ENCODE measurements at regions of chr6 and their contacts with region 1.

Region 1: DNA sequence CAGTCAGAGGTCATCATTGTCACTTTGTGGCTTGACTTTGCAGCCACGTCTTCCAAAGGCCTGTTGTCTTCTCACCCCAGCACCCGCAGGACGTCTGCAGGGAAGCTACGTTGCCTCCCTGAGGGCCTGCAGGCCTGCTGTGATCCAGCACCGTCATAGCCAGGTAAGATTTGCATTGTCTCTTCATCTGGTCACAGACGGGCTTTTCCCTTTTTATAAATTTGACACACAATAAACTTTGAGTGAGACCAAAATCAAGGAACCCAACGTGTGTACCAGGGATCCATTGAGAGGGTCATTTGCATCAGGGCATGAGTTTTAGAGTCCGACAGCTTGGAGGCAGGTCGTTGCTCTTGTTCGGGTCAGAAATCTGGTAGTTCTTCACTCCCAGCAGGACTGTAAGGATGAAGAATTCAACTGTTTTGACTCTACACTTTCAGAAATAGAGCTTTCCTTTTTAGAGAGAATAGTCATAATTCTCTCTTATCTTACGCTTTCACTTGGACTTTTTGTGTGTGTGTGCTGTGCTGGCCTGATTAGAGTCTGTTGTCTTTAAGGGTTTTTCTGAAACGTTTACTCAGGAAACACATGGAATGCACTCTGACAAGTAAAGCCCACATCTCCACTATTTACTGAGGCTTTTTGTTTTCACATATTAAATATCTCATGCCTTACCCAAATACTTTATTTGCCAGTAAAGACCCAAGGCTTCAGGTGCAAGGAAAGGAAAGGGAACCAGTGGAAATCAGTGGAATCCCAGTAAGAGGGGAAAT is 177.2 kb upstream of the TAB2 start:
- DNase-seq: peak; percentile 87
- H3K4me3 Mint-ChIP-seq: peak overlapping the region; percentile 66
- H3K27ac Mint-ChIP-seq: peak overlapping the region; percentile 94
- H3K4me1 Mint-ChIP-seq: peaks cover 42% of the 10 kb centered on the region
- H3K27me3 Mint-ChIP-seq: no peaks in the 10 kb centered on the region

Region 2: GRCh38 chr6:149082286-149082707 is 58.0 kb before region 1 on chr6:
- CTCF ChIA-PET with region 1: no interaction called
- intact Hi-C with region 1: loop called (anchors 1 kb)
- DNase-seq: peak; percentile 97
- H3K4me3 Mint-ChIP-seq: no peak overlapping the region
- H3K27ac Mint-ChIP-seq: peak overlapping the region; percentile 41
- H3K4me1 Mint-ChIP-seq: peaks cover 54% of the 10 kb centered on the region
- H3K27me3 Mint-ChIP-seq: no peaks in the 10 kb centered on the region

Region 3: GRCh38 chr6:149094156-149094555 is 46.2 kb before region 1 on chr6:
- CTCF ChIA-PET with region 1: interaction called, 3 read pairs
- intact Hi-C with region 1: loop called (anchors 1 kb)
- DNase-seq: peak; percentile 31
- H3K4me3 Mint-ChIP-seq: no peak overlapping the region
- H3K27ac Mint-ChIP-seq: peak overlapping the region; percentile 80
- H3K4me1 Mint-ChIP-seq: peaks cover 40% of the 10 kb centered on the region
- H3K27me3 Mint-ChIP-seq: no peaks in the 10 kb centered on the region

Region 4: GRCh38 chr6:149170564-149171452 is 30.5 kb after region 1 on chr6:
- CTCF ChIA-PET with region 1: no interaction called
- intact Hi-C with region 1: no loop called
- DNase-seq: no peak
- H3K4me3 Mint-ChIP-seq: no peak overlapping the region
- H3K27ac Mint-ChIP-seq: no peak overlapping the region
- H3K4me1 Mint-ChIP-seq: peaks cover 38% of the 10 kb centered on the region
- H3K27me3 Mint-ChIP-seq: no peaks in the 10 kb centered on the region

Region 5: DNA sequence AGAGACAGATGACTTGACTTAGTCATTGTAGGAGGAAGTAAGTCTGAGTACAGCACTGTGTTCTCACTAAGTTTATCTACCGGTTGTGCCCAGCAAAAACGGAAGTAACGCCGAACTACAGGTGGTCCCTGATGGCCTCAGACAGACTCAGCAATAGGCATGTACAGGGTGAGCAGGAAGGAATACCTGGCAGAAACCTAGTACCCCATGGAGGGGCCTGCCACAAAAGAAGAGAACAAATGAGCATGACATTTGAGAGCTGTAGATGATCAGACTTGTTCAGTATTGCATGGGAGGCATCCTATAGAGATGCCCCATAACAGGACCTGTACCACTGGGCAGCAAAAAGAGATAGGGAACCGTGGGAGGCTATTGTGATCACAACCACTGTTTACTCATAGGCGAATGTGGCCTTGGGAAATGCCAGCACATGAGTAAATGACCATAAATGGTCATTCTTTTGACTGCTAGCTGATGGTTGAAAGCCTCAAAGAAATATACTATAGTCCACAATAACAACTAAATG is 70.8 kb after region 1 on chr6:
- CTCF ChIA-PET with region 1: no interaction called
- intact Hi-C with region 1: loop called (anchors 1 kb)
- DNase-seq: peak; percentile 57
- H3K4me3 Mint-ChIP-seq: no peak overlapping the region
- H3K27ac Mint-ChIP-seq: peak overlapping the region; percentile 77
- H3K4me1 Mint-ChIP-seq: peaks cover 19% of the 10 kb centered on the region
- H3K27me3 Mint-ChIP-seq: no peaks in the 10 kb centered on the region

Region 6: GRCh38 chr6:149271348-149272340 is 131.3 kb after region 1 on chr6:
- CTCF ChIA-PET with region 1: no interaction called
- intact Hi-C with region 1: loop called (anchors 2 kb)
- DNase-seq: peak; percentile 68
- H3K4me3 Mint-ChIP-seq: peak overlapping the region; percentile 48
- H3K27ac Mint-ChIP-seq: peak overlapping the region; percentile 89
- H3K4me1 Mint-ChIP-seq: peaks cover 35% of the 10 kb centered on the region
- H3K27me3 Mint-ChIP-seq: no peaks in the 10 kb centered on the region

Region 7: DNA sequence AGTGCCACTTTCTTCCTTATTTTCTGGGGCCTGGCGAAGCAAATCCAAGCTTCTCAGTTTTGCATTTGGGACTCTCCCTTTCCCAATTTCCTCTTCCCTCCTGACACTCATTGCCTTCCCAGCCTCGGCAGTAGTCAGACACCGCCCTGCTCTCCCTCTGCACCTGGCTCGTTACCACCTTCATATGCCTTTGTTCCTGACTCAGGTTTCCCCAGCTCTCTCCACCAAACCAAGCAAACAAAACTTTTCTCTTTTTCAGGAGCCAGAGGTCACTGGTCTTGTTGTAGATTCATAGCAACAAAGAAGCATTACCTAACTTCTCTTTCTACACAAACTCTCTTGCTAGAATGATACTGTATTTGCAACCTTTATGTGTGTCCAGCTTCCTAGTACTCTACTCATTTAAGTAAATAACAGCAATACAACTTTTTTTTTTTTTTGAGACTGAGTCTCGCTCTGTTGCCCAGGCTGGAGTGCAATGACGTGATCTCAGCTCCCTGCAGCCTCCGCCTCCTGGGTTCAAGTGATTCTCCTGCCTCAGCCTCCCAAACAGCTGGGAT is 353.5 kb after region 1 on chr6:
- CTCF ChIA-PET with region 1: no interaction called
- intact Hi-C with region 1: loop called (anchors 2 kb)
- DNase-seq: no peak
- H3K4me3 Mint-ChIP-seq: no peak overlapping the region
- H3K27ac Mint-ChIP-seq: peak overlapping the region; percentile 91
- H3K4me1 Mint-ChIP-seq: peaks cover 85% of the 10 kb centered on the region
- H3K27me3 Mint-ChIP-seq: no peaks in the 10 kb centered on the region

Measured in activated naive CD4-positive, alpha-beta T cell treated with anti-CD3 and anti-CD28 coated beads for 36 hours (primary cell).